ENCODE measurements at regions of chr6 and their contacts with region 1.

Region 1: GRCh38 chr6:79777713-79778579 is 146.8 kb downstream of the SH3BGRL2 start:
- DNase-seq: no peak
- H3K4me3 ChIP-seq: peak overlapping the region; percentile 17
- H3K27me3 ChIP-seq: no peaks in the 10 kb centered on the region
- CTCF ChIP-seq: peak; percentile 98

Region 2: GRCh38 chr6:79650950-79651349 is 127.0 kb before region 1 on chr6:
- CTCF ChIA-PET with region 1: no interaction called
- POLR2A ChIA-PET with region 1: no interaction called
- DNase-seq: no peak
- H3K4me3 ChIP-seq: no peak overlapping the region
- H3K27me3 ChIP-seq: no peaks in the 10 kb centered on the region
- CTCF ChIP-seq: no peak

Region 3: GRCh38 chr6:79764747-79765146 is 13.2 kb before region 1 on chr6:
- CTCF ChIA-PET with region 1: interaction called, 10 read pairs
- POLR2A ChIA-PET with region 1: no interaction called
- DNase-seq: no peak
- H3K4me3 ChIP-seq: no peak overlapping the region
- H3K27me3 ChIP-seq: no peaks in the 10 kb centered on the region
- CTCF ChIP-seq: no peak

Region 4: GRCh38 chr6:79869600-79870084 is 91.7 kb after region 1 on chr6:
- CTCF ChIA-PET with region 1: interaction called, 15 read pairs
- POLR2A ChIA-PET with region 1: no interaction called
- DNase-seq: no peak
- H3K4me3 ChIP-seq: no peak overlapping the region
- H3K27me3 ChIP-seq: no peaks in the 10 kb centered on the region
- CTCF ChIP-seq: peak; percentile 99